ENCODE measurements at regions of chrX and their contacts with region 1.

Region 1: DNA sequence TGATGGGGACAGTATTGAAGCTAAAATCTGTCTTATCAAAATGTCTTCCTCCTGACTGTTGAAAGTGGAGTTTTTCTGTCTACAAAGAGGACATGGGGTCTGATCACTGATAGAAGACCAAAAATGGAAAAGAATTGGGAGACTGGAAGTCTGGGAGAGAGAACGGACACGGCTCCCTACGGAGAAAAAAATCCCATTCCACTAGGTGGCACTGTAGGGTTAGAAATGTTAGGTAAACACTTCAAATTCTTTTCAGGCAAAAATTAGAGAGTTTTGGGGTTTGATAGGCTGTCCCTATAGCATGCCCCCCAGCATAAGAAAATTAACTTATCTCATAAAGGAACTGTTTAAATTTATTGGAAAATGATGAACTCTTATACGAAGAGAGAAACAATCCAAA is 200.5 kb downstream of the FAM133A start:
- DNase-seq: peak in 1 of 10 donors; percentile 14

Region 2: DNA sequence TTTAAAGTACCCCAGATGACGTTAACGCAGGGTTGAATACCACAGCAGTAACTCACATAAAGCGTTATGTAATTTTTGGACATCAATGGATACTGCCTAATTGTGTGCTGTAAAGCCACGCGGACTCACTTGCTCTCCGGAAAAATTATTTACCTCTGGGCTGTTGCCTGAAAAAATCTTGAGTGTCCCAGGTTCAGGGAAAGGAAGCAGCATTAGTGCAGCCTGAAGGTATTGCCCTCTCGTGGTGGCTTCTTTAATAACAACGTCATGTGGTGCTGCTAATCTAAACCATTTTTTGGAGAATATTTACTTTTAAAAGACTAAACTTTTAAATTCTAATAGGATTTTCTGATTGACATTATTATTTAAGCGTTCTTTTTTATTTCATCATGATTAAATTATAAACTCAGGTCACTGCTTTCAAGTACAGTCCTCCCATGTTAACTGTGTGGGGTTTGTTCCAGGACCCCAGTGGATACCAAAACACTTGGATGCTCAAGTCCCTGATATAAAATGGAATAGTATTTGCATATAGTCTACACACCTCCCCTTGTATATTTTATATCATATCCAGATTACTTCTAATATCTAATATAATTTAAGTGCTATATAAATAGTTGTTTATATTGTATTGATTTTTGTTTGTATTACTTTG is 184.3 kb after region 1 on chrX:
- intact Hi-C with region 1: loop called (anchors 2 kb)
- DNase-seq: peak in 3 of 10 donors; percentile 4 to 49 (median 8)

Region 3: DNA sequence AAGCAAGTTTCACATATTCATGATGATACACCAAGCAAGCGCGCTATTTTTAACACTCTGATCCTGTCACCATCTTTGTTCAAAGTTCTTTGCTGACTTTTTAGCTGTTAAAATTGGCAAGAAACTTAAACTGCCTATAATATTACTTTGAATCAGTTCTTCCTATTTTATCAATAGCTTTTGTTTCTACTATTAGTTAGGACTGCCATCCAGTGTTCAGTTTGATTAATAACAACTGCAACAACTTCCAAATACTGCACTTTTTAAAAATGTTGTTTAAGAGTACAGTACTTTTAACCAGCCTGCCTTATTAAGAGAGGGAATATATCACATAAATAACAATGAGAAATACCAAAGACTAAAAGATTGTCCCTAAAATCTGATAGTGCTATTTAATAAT is 413.8 kb after region 1 on chrX:
- intact Hi-C with region 1: loop called (anchors 5 kb)
- DNase-seq: no peak

Measured in posterior cingulate gyrus (tissue), 11 donors.